Calu3 (cell line): ENCODE measurements at regions of chr20 and their contacts with region 1.

Region 1: DNA sequence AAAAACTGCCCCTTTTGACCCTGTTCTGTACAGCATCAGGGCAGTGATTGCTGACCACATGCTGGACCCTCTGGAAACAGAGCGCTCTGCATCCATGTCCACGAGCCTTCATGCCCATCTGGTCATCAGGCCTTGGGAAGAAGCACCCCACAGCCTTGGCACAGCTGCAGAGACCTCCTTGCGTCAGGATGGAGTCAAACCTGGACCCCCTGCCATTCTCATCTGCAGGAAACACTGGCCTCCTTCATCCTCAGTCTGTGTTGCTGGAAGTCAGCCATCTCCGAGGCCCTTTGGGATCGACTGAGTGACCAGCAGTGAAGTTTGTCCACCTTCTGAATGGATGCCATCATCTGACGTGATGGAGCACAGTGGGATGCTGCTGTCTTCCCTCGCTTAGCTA is 2138.3 kb upstream of the DEFB115 start:
- DNase-seq: no peak
- H3K4me3 Mint-ChIP-seq: no peak overlapping the region
- H3K27ac Mint-ChIP-seq: no peak overlapping the region
- H3K4me1 Mint-ChIP-seq: no peaks in the 10 kb centered on the region
- H3K27me3 Mint-ChIP-seq: no peaks in the 10 kb centered on the region
- CTCF ChIP-seq: no peak

Region 2: GRCh38 chr20:29079769-29080690 is 39.1 kb before region 1 on chr20:
- CTCF ChIA-PET with region 1: no interaction called
- intact Hi-C with region 1: no loop called
- DNase-seq: no peak
- H3K4me3 Mint-ChIP-seq: no peak overlapping the region
- H3K27ac Mint-ChIP-seq: no peak overlapping the region
- H3K4me1 Mint-ChIP-seq: no peaks in the 10 kb centered on the region
- H3K27me3 Mint-ChIP-seq: no peaks in the 10 kb centered on the region
- CTCF ChIP-seq: no peak

Region 3: GRCh38 chr20:29326376-29327070 is 207.4 kb after region 1 on chr20:
- CTCF ChIA-PET with region 1: no interaction called
- intact Hi-C with region 1: no loop called
- DNase-seq: no peak
- H3K4me3 Mint-ChIP-seq: no peak overlapping the region
- H3K27ac Mint-ChIP-seq: no peak overlapping the region
- H3K4me1 Mint-ChIP-seq: no peaks in the 10 kb centered on the region
- H3K27me3 Mint-ChIP-seq: no peaks in the 10 kb centered on the region
- CTCF ChIP-seq: no peak

Region 4: DNA sequence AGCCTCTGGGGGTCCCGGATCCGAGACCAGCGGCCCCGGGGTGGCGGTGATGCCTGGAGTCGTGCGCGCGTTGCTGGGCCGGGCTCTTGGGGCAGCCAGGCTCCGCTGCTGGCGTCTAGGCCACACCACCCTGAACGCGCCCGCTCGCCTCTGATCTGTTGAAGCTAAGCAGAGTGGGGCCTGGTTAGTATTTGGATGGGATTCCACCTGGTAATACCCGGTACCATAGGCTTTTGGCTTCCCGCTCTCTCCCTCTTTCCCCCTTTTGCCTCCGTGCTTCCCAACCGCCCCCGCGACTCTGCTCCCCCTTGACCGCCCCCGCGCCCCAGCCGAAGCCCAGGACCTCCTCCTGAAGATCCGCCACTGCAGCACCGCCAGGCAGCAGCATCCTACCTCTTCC is 754.8 kb after region 1 on chr20:
- CTCF ChIA-PET with region 1: no interaction called
- intact Hi-C with region 1: loop called (anchors 10 kb)
- DNase-seq: peak; percentile 20
- H3K4me3 Mint-ChIP-seq: no peak overlapping the region
- H3K27ac Mint-ChIP-seq: no peak overlapping the region
- H3K4me1 Mint-ChIP-seq: no peaks in the 10 kb centered on the region
- H3K27me3 Mint-ChIP-seq: no peaks in the 10 kb centered on the region
- CTCF ChIP-seq: no peak

Region 5: DNA sequence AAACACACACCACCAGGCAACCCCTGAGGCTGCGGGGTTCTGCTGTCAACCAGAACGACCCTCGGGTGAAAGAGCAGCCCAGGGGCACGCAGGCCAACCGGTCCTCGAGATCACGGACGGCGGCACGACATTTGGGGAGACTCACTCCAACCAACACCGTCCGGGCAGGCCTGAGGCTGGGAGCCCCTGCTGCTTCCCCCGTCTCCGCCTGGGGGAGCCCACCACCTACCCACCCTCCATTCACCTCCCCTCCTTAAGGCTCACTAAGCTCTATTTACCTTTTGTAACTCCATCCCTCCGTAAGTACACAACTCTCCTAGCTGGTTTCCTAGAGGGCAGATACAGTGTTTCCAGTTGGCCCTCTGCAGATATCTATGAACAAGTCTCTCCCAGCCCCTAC is 1167.0 kb after region 1 on chr20:
- CTCF ChIA-PET with region 1: no interaction called
- intact Hi-C with region 1: no loop called
- DNase-seq: no peak
- H3K4me3 Mint-ChIP-seq: no peak overlapping the region
- H3K27ac Mint-ChIP-seq: no peak overlapping the region
- H3K4me1 Mint-ChIP-seq: peaks cover 24% of the 10 kb centered on the region
- H3K27me3 Mint-ChIP-seq: no peaks in the 10 kb centered on the region
- CTCF ChIP-seq: no peak